CD8-positive, alpha-beta T cell (primary cell): ENCODE measurements at regions of chr17 and their contacts with region 1.

Region 1: GRCh38 chr17:41665566-41666236 is 23.0 kb upstream of the EIF1 start:
- DNase-seq: peak; percentile 77 to 95 (median 89)
- ATAC-seq: peak; percentile 78
- H3K4me3 ChIP-seq: peak overlapping the region; percentile 56 to 61
- H3K4me3 Mint-ChIP-seq: peak overlapping the region; percentile 85
- H3K27ac ChIP-seq: peak overlapping the region; percentile 82 to 97
- H3K27ac Mint-ChIP-seq: peak overlapping the region; percentile 94
- H3K4me1 ChIP-seq: peaks cover 5% of the 10 kb centered on the region
- H3K4me1 Mint-ChIP-seq: peaks cover 24% of the 10 kb centered on the region
- H3K27me3 ChIP-seq: no peaks in the 10 kb centered on the region
- H3K27me3 Mint-ChIP-seq: no peaks in the 10 kb centered on the region
- CTCF ChIP-seq: peak; percentile 96

Region 2: DNA sequence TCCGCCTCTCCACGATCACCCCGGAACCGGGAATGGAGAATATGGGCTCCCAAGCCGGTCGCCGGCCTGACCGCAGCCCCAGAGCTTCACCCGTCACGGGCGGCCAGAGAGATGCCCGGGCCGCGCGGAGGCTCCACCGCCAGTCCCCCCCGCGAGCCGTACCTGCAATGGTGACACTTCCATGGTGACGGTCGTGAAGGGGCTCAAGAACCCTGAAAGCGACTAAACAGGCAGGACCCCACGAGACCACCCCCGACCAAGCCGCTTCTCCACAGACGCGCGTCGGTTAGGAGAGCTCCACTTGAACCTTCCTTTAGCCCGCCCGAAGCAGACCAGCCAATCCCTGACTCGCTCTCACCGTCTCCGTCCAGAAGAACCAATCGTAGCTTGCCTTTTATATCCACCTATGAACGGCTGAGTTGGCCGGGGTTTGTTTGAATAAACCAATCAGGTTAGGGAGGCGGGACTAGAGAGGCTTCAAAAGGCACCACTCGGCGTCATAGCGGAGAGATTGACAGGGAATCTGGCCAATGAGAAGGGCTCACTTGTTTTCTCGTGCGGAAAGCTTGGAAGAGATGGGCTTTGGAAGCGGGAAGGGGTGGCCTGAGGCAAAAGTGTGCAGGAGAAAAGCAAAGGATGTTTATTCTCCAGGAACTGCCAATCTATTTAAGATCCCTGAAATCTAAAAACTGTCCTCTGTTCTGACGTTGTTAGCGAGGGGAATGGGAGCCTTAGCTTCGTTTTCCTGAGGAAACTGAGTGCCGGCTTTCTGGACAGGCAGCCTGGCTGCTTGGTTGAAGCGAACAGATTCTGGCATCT is 1247.9 kb before region 1 on chr17 and contains the start of gene TOP2A:
- CTCF ChIA-PET with region 1: no interaction called
- POLR2A ChIA-PET with region 1: no interaction called
- intact Hi-C with region 1: loop called in 1 of 2 experiments (anchors 10 kb)
- DNase-seq: peak; percentile 90 to 99 (median 95)
- ATAC-seq: peak; percentile 99
- H3K4me3 ChIP-seq: peak within 1 kb of the TSS; percentile 75
- H3K4me3 Mint-ChIP-seq: peak within 1 kb of the TSS; percentile 92
- H3K27ac ChIP-seq: peak within 1 kb of the TSS; percentile 42 to 49
- H3K27ac Mint-ChIP-seq: peak within 1 kb of the TSS; percentile 91
- H3K4me1 ChIP-seq: peaks cover 6% of the 10 kb centered on the region
- H3K4me1 Mint-ChIP-seq: peaks cover 17% of the 10 kb centered on the region
- H3K27me3 ChIP-seq: no peaks in the 10 kb centered on the region
- H3K27me3 Mint-ChIP-seq: peaks cover 3% of the 10 kb centered on the region
- CTCF ChIP-seq: no peak
- total RNA-seq, gene TOP2A: 2.9 TPM

Region 3: DNA sequence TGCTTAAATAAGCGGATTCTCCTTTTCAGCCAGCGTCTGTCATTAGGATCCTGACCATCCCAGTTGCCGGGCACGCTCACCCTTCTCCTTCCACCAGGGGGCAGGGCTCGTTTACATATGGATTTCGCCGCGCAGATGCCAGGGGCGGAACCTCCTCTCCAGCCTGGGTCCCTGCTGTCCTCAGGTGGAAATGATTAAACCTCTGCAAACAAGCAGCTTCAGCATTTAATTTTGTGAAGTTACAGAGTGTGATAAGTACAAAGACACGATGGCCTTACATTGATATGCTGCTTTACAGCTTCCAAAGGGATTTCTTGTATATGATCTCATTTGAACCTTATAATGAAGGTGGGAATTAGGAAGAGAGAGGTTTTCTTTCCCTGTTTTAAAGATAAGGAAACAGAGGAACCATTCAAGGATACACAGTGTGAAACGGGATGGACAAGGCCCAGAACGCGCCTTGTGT is 862.1 kb before region 1 on chr17:
- CTCF ChIA-PET with region 1: interaction called, 35 read pairs
- POLR2A ChIA-PET with region 1: interaction called, 3 read pairs
- intact Hi-C with region 1: loop called (anchors 1 kb)
- DNase-seq: peak; percentile 50 to 82 (median 75)
- ATAC-seq: peak; percentile 92
- H3K4me3 ChIP-seq: no peak overlapping the region
- H3K4me3 Mint-ChIP-seq: no peak overlapping the region
- H3K27ac ChIP-seq: no peak overlapping the region
- H3K27ac Mint-ChIP-seq: no peak overlapping the region
- H3K4me1 ChIP-seq: no peaks in the 10 kb centered on the region
- H3K4me1 Mint-ChIP-seq: peaks cover 4% of the 10 kb centered on the region
- H3K27me3 ChIP-seq: peaks cover 0 to 4% of the 10 kb centered on the region in 2 experiments
- H3K27me3 Mint-ChIP-seq: peaks cover 44% of the 10 kb centered on the region
- CTCF ChIP-seq: peak; percentile 94

Region 4: GRCh38 chr17:40909351-40909750 is 756.4 kb before region 1 on chr17:
- CTCF ChIA-PET with region 1: interaction called, 57 read pairs
- POLR2A ChIA-PET with region 1: no interaction called
- intact Hi-C with region 1: loop called (anchors 1 kb)
- DNase-seq: peak; percentile 33 to 81 (median 66)
- ATAC-seq: peak; percentile 88
- H3K4me3 ChIP-seq: no peak overlapping the region
- H3K4me3 Mint-ChIP-seq: no peak overlapping the region
- H3K27ac ChIP-seq: no peak overlapping the region
- H3K27ac Mint-ChIP-seq: no peak overlapping the region
- H3K4me1 ChIP-seq: no peaks in the 10 kb centered on the region
- H3K4me1 Mint-ChIP-seq: no peaks in the 10 kb centered on the region
- H3K27me3 ChIP-seq: peaks cover 0 to 5% of the 10 kb centered on the region in 2 experiments
- H3K27me3 Mint-ChIP-seq: peaks cover 35% of the 10 kb centered on the region
- CTCF ChIP-seq: peak; percentile 82

Region 5: GRCh38 chr17:41338961-41339485 is 326.7 kb before region 1 on chr17:
- CTCF ChIA-PET with region 1: interaction called, 4 read pairs
- POLR2A ChIA-PET with region 1: no interaction called
- intact Hi-C with region 1: loop called (anchors 5 kb)
- DNase-seq: peak in 5 of 9 experiments; percentile 38 to 94 (median 68)
- ATAC-seq: peak; percentile 82
- H3K4me3 ChIP-seq: peak overlapping the region in 1 of 2 experiments; percentile 2
- H3K4me3 Mint-ChIP-seq: peak overlapping the region; percentile 63
- H3K27ac ChIP-seq: peak overlapping the region; percentile 58 to 63
- H3K27ac Mint-ChIP-seq: peak overlapping the region; percentile 98
- H3K4me1 ChIP-seq: peaks cover 85% of the 10 kb centered on the region
- H3K4me1 Mint-ChIP-seq: peaks cover 90% of the 10 kb centered on the region
- H3K27me3 ChIP-seq: no peaks in the 10 kb centered on the region
- H3K27me3 Mint-ChIP-seq: no peaks in the 10 kb centered on the region
- CTCF ChIP-seq: no peak

Region 6: DNA sequence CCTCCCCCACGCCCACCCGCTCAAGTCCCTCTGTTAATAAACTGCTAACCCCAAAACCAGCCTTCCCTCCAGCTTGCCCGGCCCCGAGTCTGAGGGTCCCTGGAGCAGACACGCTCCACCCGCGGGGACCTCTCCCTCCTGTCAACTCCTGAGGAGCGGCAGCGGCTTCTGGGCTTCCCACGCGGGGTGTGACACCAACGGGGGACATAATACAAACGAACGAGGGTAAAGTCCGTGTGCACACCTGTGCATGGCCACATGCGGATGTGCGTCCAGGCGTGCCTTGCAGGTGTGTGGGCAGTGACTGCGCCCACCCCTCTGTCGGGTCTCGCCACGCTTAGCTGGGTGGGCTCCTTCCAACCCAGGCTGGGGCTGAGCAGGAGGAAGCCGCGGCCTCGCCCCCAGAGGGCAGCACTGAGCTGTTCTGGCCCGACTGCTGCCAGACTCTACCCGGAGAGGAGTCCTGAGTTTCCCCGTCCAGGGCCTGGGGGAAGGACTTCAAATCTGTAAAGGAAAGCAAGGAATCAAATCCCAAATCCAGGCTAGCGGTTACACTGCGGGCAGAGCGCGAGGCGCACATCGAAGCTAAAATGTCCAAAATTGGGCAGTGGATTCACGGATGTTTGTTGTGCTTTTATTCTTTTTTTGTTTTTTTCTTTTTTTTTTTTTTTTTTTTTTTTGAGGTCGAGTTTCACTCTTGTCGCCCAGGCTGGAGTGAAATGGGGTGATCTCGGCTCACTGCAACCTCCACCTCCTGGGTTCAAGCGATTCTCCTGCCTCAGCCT is 17.1 kb before region 1 on chr17:
- CTCF ChIA-PET with region 1: interaction called, 405 read pairs
- POLR2A ChIA-PET with region 1: interaction called, 14 read pairs
- intact Hi-C with region 1: loop called (anchors 1 kb)
- DNase-seq: peak; percentile 65 to 92 (median 86)
- ATAC-seq: peak; percentile 90
- H3K4me3 ChIP-seq: peak overlapping the region; percentile 52 to 55
- H3K4me3 Mint-ChIP-seq: peak overlapping the region; percentile 80
- H3K27ac ChIP-seq: no peak overlapping the region
- H3K27ac Mint-ChIP-seq: no peak overlapping the region
- H3K4me1 ChIP-seq: peaks cover 13% of the 10 kb centered on the region
- H3K4me1 Mint-ChIP-seq: peaks cover 9% of the 10 kb centered on the region
- H3K27me3 ChIP-seq: no peaks in the 10 kb centered on the region
- H3K27me3 Mint-ChIP-seq: no peaks in the 10 kb centered on the region
- CTCF ChIP-seq: peak; percentile 70

Region 7: GRCh38 chr17:41695954-41696756 is 30.5 kb after region 1 on chr17:
- CTCF ChIA-PET with region 1: interaction called, 21 read pairs
- POLR2A ChIA-PET with region 1: interaction called, 101 read pairs
- intact Hi-C with region 1: no loop called
- DNase-seq: peak; percentile 42 to 86 (median 81)
- ATAC-seq: peak; percentile 55
- H3K4me3 ChIP-seq: no peak overlapping the region
- H3K4me3 Mint-ChIP-seq: no peak overlapping the region
- H3K27ac ChIP-seq: no peak overlapping the region
- H3K27ac Mint-ChIP-seq: peak overlapping the region; percentile 7
- H3K4me1 ChIP-seq: peaks cover 5% of the 10 kb centered on the region
- H3K4me1 Mint-ChIP-seq: peaks cover 29% of the 10 kb centered on the region
- H3K27me3 ChIP-seq: no peaks in the 10 kb centered on the region
- H3K27me3 Mint-ChIP-seq: no peaks in the 10 kb centered on the region
- CTCF ChIP-seq: peak; percentile 82